Panc1 (cell line): ENCODE measurements at regions of chr3 and their contacts with region 1.

Region 1: DNA sequence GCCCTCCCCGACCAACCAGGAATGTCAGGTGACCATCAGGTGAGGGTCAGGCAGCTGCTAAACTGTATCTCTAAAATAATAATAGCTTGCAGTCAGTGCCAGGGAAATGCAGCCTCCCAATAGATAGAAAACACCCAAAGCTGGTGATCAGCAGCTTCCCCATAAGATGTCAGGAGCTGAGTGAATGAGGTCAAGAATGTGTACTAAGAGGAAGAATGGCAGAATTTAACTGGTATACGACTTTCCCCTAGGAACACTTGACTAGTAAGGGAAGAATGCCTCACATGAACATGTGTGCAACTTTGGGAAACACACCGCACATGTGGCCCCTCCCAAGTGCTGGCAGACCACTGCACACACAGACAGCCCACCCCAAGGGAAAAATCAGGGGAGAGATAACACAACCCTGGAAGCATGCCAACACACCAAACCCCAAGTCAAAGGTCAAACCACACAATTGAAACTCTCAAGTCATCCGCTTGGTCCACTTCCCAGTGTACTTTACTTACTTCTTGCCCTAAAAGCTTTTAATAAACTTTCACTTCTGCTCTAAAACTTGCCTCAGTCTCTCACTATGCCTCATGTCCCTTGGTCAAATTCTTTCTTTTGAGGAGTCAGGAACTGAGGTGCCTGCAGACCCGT is 806.5 kb downstream of the OTOL1 start:
- DNase-seq: no peak
- ATAC-seq: no peak
- H3K4me3 ChIP-seq: no peak overlapping the region
- H3K27ac ChIP-seq: no peak overlapping the region
- H3K4me1 ChIP-seq: no peaks in the 10 kb centered on the region
- H3K27me3 ChIP-seq: no peaks in the 10 kb centered on the region
- CTCF ChIP-seq: no peak

Region 2: DNA sequence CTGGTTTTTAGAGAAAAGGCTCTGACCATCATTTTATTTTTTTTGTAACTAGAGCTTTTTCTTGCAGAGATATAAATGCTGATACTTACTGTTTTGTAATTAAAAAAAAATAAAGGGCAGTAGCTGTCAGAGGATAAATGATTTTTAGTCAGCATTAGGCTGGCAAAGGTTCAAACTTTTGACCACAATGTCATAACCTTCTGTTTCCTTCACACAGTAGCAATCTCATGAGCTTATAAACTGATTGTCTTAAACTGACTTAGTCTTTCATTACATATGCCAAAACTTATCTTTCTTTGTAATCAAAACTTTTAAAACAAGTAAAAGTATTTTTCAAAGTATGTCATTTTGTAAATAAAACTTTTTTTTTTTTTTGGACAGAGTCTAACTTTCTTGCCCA is 35.4 kb after region 1 on chr3:
- CTCF ChIA-PET with region 1: no interaction called
- POLR2A ChIA-PET with region 1: interaction called, 16 read pairs
- in situ Hi-C with region 1: no loop called
- intact Hi-C with region 1: no loop called
- DNase-seq: no peak
- ATAC-seq: no peak
- H3K4me3 ChIP-seq: no peak overlapping the region
- H3K27ac ChIP-seq: no peak overlapping the region
- H3K4me1 ChIP-seq: no peaks in the 10 kb centered on the region
- H3K27me3 ChIP-seq: no peaks in the 10 kb centered on the region
- CTCF ChIP-seq: no peak